GM13976 (cell line): ENCODE measurements at regions of chr15 and their contacts with region 1.

Region 1: GRCh38 chr15:101008158-101009139 is 89.3 kb downstream of the LRRK1 start:
- DNase-seq: peak; percentile 93
- CTCF ChIP-seq: peak; percentile 99

Region 2: GRCh38 chr15:100349696-100350433 is 658.6 kb before region 1 on chr15:
- in situ Hi-C with region 1: loop called (anchors 25 kb)
- DNase-seq: peak; percentile 82
- CTCF ChIP-seq: peak; percentile 57

Region 3: DNA sequence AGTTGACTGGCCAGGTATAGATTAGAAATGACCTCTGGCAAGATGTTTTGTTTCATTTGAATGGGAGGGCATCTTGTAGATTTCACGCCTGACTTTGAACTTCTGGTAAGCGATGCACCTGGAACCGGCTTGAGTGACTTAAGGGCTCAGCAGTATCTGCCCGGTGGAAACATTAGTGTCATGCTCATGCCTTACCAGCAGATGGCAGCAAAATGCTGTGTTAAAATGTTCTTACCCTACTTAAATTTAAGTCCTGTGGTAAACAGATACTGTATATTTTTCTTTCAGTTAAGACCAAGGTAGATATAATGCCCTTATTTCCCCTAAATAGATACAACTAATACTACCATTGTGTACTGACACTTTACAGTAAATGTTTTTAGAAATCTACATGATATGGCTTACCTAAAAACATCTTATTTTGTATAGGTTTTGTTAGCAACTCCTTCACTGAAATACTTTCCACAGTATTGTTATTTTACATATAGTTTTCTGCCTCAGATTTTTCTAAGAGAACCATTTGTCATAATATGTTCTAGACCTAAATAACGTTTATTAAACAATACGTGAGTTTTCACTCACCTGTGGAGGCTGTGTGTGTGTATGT is 380.6 kb before region 1 on chr15:
- in situ Hi-C with region 1: loop called (anchors 25 kb)
- DNase-seq: peak; percentile 64
- CTCF ChIP-seq: peak; percentile 82

Region 4: GRCh38 chr15:100919481-100920405 is 88.7 kb before region 1 on chr15:
- in situ Hi-C with region 1: loop called (anchors 5 kb)
- DNase-seq: peak; percentile 60
- CTCF ChIP-seq: no peak